ENCODE measurements at regions of chr1 and their contacts with region 1.

Region 1: GRCh38 chr1:94854458-94855306 is 34.5 kb downstream of the SLC44A3 start:
- DNase-seq: peak; percentile 94
- H3K4me3 ChIP-seq: peak overlapping the region in 2 of 3 experiments; percentile 20 to 27
- H3K27ac ChIP-seq: peak overlapping the region; percentile 57
- H3K4me1 ChIP-seq: peaks cover 16% of the 10 kb centered on the region
- H3K27me3 ChIP-seq: peaks cover 0 to 1% of the 10 kb centered on the region in 2 experiments
- CTCF ChIP-seq: peak; percentile 90 to 93
- POLR2A ChIP-seq: peak; percentile 48

Region 2: GRCh38 chr1:94773931-94774422 is 80.7 kb before region 1 on chr1:
- CTCF ChIA-PET with region 1: no interaction called
- POLR2A ChIA-PET with region 1: no interaction called
- dilution Hi-C with region 1: no loop called
- intact Hi-C with region 1: no loop called
- DNase-seq: no peak
- H3K4me3 ChIP-seq: no peak overlapping the region
- H3K27ac ChIP-seq: no peak overlapping the region
- H3K4me1 ChIP-seq: no peaks in the 10 kb centered on the region
- H3K27me3 ChIP-seq: no peaks in the 10 kb centered on the region
- CTCF ChIP-seq: no peak
- POLR2A ChIP-seq: no peak

Region 3: GRCh38 chr1:94805912-94806311 is 48.8 kb before region 1 on chr1:
- CTCF ChIA-PET with region 1: interaction called, 11 read pairs
- POLR2A ChIA-PET with region 1: no interaction called
- dilution Hi-C with region 1: no loop called
- intact Hi-C with region 1: loop called (anchors 5 kb)
- DNase-seq: peak; percentile 58
- H3K4me3 ChIP-seq: peak overlapping the region in 1 of 3 experiments; percentile 38
- H3K27ac ChIP-seq: no peak overlapping the region
- H3K4me1 ChIP-seq: peaks cover 30% of the 10 kb centered on the region
- H3K27me3 ChIP-seq: peaks cover under 1 to 6% of the 10 kb centered on the region in 2 experiments
- CTCF ChIP-seq: peak; percentile 82 to 87
- POLR2A ChIP-seq: no peak

Region 4: DNA sequence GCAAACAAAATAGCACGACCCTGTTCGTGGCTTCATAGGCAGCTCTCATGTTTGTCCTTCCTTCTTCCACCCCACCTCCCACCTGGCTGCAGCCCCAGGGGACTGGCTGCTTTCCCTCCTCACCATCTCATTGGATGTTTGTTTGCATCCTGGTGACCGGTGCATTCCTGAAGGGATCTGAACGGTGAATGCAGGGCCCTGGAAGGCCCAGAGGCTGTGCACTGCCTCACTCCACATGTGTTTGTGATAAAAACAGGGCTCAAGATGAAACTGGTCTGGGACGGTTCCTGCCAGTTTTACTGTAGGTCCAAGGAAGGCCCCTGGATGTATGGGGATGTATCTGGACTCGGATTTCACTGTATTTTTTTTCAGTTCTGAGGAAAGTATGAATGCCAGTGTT is 29.4 kb after region 1 on chr1:
- CTCF ChIA-PET with region 1: interaction called, 26 read pairs
- POLR2A ChIA-PET with region 1: no interaction called
- dilution Hi-C with region 1: no loop called
- intact Hi-C with region 1: loop called (anchors 2 kb)
- DNase-seq: no peak
- H3K4me3 ChIP-seq: no peak overlapping the region
- H3K27ac ChIP-seq: no peak overlapping the region
- H3K4me1 ChIP-seq: peaks cover 3% of the 10 kb centered on the region
- H3K27me3 ChIP-seq: no peaks in the 10 kb centered on the region
- CTCF ChIP-seq: no peak
- POLR2A ChIP-seq: no peak

Region 5: DNA sequence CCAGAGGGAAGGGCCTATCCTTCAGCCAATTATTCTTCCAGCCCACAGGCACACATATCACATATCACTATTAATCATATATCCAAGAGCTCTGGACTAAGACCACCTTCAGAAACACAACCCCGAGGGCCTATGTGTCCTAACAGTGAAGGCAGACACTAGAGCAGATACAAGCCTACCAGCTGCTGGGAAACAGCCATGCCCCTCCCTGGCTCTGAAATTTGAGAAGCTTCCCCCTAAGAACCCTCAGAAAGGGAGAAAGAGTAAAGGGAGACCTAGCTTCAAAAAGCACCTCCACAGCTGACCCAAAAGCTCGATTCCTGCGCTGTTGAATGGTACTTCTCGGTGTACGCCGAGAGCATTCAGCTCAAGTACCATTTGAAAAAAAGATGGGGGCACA is 54.8 kb after region 1 on chr1:
- CTCF ChIA-PET with region 1: interaction called, 13 read pairs
- POLR2A ChIA-PET with region 1: no interaction called
- dilution Hi-C with region 1: no loop called
- intact Hi-C with region 1: no loop called
- DNase-seq: no peak
- H3K4me3 ChIP-seq: no peak overlapping the region
- H3K27ac ChIP-seq: no peak overlapping the region
- H3K4me1 ChIP-seq: peaks cover under 1% of the 10 kb centered on the region
- H3K27me3 ChIP-seq: no peaks in the 10 kb centered on the region
- CTCF ChIP-seq: no peak
- POLR2A ChIP-seq: no peak

Region 6: GRCh38 chr1:94936861-94937620 is 82.4 kb after region 1 on chr1:
- CTCF ChIA-PET with region 1: interaction called, 22 read pairs
- POLR2A ChIA-PET with region 1: no interaction called
- dilution Hi-C with region 1: no loop called
- intact Hi-C with region 1: no loop called
- DNase-seq: peak; percentile 65
- H3K4me3 ChIP-seq: no peak overlapping the region
- H3K27ac ChIP-seq: peak overlapping the region; percentile 20
- H3K4me1 ChIP-seq: peaks cover 35% of the 10 kb centered on the region
- H3K27me3 ChIP-seq: no peaks in the 10 kb centered on the region
- CTCF ChIP-seq: no peak
- POLR2A ChIP-seq: no peak

Region 7: DNA sequence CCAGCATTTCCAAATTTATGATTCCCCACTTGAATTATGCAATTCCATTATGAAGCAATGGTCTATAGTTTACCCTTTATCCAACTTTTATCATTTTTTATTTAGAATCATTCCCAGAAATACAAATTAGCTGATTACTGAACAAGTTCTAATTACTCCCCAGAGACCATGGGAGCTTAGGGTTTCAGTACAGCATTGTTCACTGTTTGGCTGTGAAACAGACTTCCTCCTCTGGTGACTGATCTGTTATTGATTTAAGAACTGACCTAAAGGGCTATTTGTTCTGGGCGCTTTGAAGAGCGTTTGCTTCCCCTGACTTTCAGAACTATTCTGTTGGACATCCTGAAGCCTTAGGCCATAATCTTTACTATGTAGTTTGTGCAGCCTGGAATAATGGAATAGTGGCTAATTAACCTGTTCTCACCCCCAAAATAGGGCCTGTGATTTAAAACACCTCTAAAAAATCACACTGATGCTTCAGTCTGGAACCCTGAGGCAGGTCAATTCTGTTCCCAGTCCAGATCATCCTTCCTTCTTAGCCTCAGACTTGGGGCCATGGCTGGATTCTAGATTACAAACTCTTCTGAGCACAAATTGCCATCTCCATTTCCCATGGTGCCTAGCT is 159.4 kb after region 1 on chr1:
- CTCF ChIA-PET with region 1: interaction called, 11 read pairs
- POLR2A ChIA-PET with region 1: no interaction called
- dilution Hi-C with region 1: no loop called
- intact Hi-C with region 1: no loop called
- DNase-seq: peak; percentile 86
- H3K4me3 ChIP-seq: no peak overlapping the region
- H3K27ac ChIP-seq: peak overlapping the region; percentile 55
- H3K4me1 ChIP-seq: peaks cover 13% of the 10 kb centered on the region
- H3K27me3 ChIP-seq: no peaks in the 10 kb centered on the region
- CTCF ChIP-seq: no peak
- POLR2A ChIP-seq: no peak